ENCODE measurements at regions of chr12 and their contacts with region 1.

Region 1: GRCh38 chr12:108664338-108665258 is 30.9 kb upstream of the SELPLG start:
- DNase-seq: peak; percentile 92
- ATAC-seq: peak; percentile 100
- H3K4me3 Mint-ChIP-seq: peak overlapping the region; percentile 31
- H3K27ac Mint-ChIP-seq: peak overlapping the region; percentile 79
- H3K4me1 Mint-ChIP-seq: peaks cover 19% of the 10 kb centered on the region
- H3K27me3 Mint-ChIP-seq: no peaks in the 10 kb centered on the region
- CTCF ChIP-seq: peak; percentile 96

Region 2: GRCh38 chr12:108618079-108618952 is 46.3 kb before region 1 on chr12:
- CTCF ChIA-PET with region 1: interaction called, 37 read pairs
- POLR2A ChIA-PET with region 1: no interaction called
- intact Hi-C with region 1: no loop called
- DNase-seq: peak; percentile 83
- ATAC-seq: peak; percentile 19
- H3K4me3 Mint-ChIP-seq: no peak overlapping the region
- H3K27ac Mint-ChIP-seq: peak overlapping the region; percentile 45
- H3K4me1 Mint-ChIP-seq: peaks cover 47% of the 10 kb centered on the region
- H3K27me3 Mint-ChIP-seq: no peaks in the 10 kb centered on the region
- CTCF ChIP-seq: peak; percentile 99

Region 3: GRCh38 chr12:108646600-108647579 is 17.7 kb before region 1 on chr12:
- CTCF ChIA-PET with region 1: interaction called, 26 read pairs
- POLR2A ChIA-PET with region 1: no interaction called
- intact Hi-C with region 1: no loop called
- DNase-seq: no peak
- ATAC-seq: peak; percentile 47
- H3K4me3 Mint-ChIP-seq: peak overlapping the region; percentile 25
- H3K27ac Mint-ChIP-seq: peak overlapping the region; percentile 62
- H3K4me1 Mint-ChIP-seq: peaks cover 31% of the 10 kb centered on the region
- H3K27me3 Mint-ChIP-seq: no peaks in the 10 kb centered on the region
- CTCF ChIP-seq: no peak

Region 4: DNA sequence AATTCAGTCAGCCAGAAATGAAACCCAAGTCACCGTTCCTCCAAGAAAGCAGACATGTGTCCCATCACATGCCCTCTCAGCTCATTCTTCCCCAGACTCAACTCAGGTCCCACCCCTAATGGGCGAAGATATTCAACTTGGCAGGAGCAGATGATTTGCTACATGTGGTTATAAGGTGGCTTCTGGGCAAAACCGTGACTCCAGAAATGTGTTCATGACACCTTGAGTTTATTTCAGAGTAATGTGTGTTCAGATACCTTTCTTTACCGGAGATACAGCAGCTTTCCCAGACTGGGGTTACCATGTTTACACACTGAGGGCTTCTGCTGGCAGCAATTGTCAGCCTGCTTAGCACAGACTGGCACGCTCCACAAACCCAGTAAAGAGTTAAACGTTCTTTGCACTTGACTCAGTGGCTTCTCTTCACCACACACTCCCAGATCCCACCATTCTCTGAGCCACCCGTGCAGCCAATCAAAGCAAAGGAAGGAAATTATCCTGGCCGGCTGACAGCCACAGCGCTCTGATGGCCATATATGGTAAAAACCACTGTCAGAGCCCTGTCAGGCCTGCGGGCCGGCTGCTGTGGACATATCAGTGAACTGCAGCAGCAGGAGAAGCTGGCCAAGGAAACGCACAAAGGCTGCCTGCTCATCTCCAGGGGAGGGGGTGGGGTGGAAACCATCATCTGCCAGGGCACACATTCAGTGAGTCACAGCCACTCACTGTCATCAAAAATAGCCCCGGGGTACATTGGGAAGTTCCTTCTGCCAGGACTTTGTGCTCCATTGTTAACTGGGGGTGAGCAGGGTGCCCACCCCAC is 26.8 kb after region 1 on chr12:
- CTCF ChIA-PET with region 1: interaction called, 110 read pairs
- POLR2A ChIA-PET with region 1: interaction called, 4 read pairs
- intact Hi-C with region 1: no loop called
- DNase-seq: peak; percentile 95
- ATAC-seq: peak; percentile 81
- H3K4me3 Mint-ChIP-seq: peak overlapping the region; percentile 63
- H3K27ac Mint-ChIP-seq: peak overlapping the region; percentile 86
- H3K4me1 Mint-ChIP-seq: peaks cover 68% of the 10 kb centered on the region
- H3K27me3 Mint-ChIP-seq: no peaks in the 10 kb centered on the region
- CTCF ChIP-seq: peak; percentile 41

Region 5: DNA sequence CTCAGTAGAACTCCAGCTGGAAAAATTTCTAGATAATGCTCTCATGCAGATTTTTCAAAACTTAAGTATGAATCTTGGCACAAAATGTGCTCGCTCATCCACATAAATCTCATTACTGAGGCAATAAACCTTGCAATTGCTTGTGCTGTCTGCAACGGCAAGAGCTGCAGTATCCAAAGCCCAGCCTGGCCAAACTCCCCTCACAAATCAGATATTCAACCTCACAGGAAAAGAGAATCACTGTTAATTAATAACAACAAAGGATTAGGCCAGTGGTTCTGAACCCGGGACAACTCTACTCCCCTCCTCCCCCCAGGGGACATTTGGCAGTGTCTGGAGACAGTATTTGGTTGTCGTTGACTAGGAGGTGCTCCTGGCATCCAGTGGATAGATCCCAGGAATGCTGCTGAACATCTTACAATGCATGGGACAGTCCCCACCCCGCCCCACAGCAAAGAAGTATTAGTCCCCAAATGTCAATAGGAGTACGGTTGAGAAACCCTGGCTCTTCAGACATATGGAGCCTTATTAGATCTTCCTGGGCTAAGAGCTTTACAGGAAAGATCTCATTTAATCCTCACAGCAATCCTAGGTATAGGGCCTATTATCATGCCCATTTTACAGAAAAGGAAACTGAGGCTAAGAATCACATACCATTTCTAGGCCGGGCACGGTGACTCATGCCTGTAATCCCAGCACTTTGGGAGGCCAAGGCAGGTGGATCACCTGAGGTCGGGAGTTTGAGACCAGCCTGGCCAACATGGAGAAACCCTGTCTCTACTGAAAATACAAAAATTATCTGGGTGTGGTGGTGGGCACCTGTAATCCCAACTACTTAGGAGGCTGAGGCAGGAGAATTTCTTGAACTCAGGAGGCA is 86.2 kb after region 1 on chr12:
- CTCF ChIA-PET with region 1: interaction called, 23 read pairs
- POLR2A ChIA-PET with region 1: no interaction called
- intact Hi-C with region 1: no loop called
- DNase-seq: no peak
- ATAC-seq: no peak
- H3K4me3 Mint-ChIP-seq: no peak overlapping the region
- H3K27ac Mint-ChIP-seq: no peak overlapping the region
- H3K4me1 Mint-ChIP-seq: no peaks in the 10 kb centered on the region
- H3K27me3 Mint-ChIP-seq: no peaks in the 10 kb centered on the region
- CTCF ChIP-seq: no peak

Region 6: GRCh38 chr12:108803428-108804105 is 139.0 kb after region 1 on chr12:
- CTCF ChIA-PET with region 1: interaction called, 347 read pairs
- POLR2A ChIA-PET with region 1: interaction called, 3 read pairs
- intact Hi-C with region 1: loop called (anchors 2 kb)
- DNase-seq: peak; percentile 79
- ATAC-seq: peak; percentile 92
- H3K4me3 Mint-ChIP-seq: no peak overlapping the region
- H3K27ac Mint-ChIP-seq: peak overlapping the region; percentile 73
- H3K4me1 Mint-ChIP-seq: peaks cover 7% of the 10 kb centered on the region
- H3K27me3 Mint-ChIP-seq: no peaks in the 10 kb centered on the region
- CTCF ChIP-seq: peak; percentile 99

Measured in activated CD8-positive, alpha-beta T cell treated with anti-CD3 and anti-CD28 coated beads for 36 hours (primary cell).